Heart right ventricle (tissue), 16 donors: ENCODE measurements at regions of chr9 and their contacts with region 1.

Region 1: DNA sequence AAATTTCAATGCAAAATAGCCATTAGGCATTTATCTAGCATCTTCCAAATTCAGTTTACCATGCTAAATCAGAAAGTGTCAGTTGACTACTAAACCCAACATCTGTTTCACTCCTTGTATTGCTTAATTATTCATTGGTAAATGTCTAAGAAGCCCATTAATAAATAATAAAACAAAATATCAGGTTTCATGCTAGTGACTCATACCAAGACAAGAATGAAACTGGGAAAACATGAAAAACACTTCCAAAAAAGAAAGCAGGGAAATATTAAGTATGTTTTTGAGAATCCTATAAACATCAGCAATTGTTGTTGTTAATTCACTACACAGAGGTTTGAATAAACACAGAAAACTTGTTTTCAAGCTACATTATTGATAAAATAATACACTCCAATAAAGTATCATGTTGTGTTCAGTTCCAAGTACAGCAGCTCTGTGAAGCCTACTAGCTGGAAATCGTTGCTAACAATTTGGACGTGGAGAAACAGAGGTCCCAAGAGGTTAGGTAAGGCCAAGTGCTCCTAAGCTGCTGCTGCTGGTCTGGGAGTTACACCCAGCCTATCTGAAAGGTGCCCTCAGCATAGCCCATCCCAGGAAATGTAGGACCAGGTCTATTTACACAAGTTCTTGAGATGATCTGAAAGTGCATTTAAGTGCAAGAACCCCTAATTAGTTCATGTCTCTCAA is 78.8 kb downstream of the GNAQ start:
- DNase-seq: peak in 1 of 2 donors; percentile 21
- ATAC-seq: peak in 7 of 8 donors; percentile 46 to 80 (median 65)
- H3K4me3 ChIP-seq: peak overlapping the region in 1 of 10 donors; percentile 1
- H3K27ac ChIP-seq: peak overlapping the region in 5 of 10 donors; percentile 2 to 68 (median 30)
- H3K4me1 ChIP-seq: peaks cover 2 to 89% (median 55%) of the 10 kb centered on the region in 9 donors
- H3K27me3 ChIP-seq: no peaks in the 10 kb centered on the region
- CTCF ChIP-seq: no peak

Region 2: GRCh38 chr9:77261605-77262004 is 691.2 kb before region 1 on chr9:
- intact Hi-C with region 1: no loop called
- DNase-seq: no peak
- ATAC-seq: no peak
- H3K4me3 ChIP-seq: no peak overlapping the region
- H3K27ac ChIP-seq: no peak overlapping the region
- H3K4me1 ChIP-seq: no peaks in the 10 kb centered on the region
- H3K27me3 ChIP-seq: no peaks in the 10 kb centered on the region
- CTCF ChIP-seq: no peak

Region 3: DNA sequence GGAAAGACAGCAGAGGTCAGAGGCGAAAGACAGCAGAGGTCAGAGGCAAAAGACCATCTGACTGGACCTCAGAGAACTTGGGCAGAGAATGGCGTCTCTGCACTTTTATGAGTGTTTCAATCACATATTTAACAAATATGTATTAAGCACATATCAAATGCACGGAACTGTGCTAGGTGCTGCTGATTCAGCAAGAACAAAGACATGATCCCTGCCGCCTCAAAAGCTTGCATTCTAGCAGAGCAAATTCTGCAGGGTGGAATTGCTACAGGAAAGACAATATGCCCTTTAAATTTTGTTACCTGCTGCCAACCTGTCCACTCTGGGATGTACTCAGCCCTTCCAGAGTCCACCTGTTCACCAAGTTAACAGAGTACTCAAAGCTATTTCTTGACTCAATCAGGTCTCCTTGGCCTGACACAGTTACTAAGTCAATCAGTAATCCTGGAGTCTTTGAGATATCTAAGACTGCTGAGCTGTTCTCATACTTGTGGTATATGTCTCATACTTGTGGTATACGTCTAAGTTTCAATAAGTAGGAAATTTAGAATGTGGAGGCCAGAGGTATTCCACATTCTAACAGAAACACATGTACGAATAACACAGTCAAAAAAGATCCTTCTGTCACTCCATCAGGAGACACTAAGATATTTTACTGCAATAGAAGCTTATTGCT is 53.0 kb before region 1 on chr9:
- intact Hi-C with region 1: loop called in 2 of 10 experiments (anchors 5 to 10 kb)
- DNase-seq: no peak
- ATAC-seq: no peak
- H3K4me3 ChIP-seq: no peak overlapping the region
- H3K27ac ChIP-seq: no peak overlapping the region
- H3K4me1 ChIP-seq: peaks cover 0 to 34% (median 12%) of the 10 kb centered on the region in 9 donors
- H3K27me3 ChIP-seq: no peaks in the 10 kb centered on the region
- CTCF ChIP-seq: no peak